ENCODE measurements at regions of chr7 and their contacts with region 1.

Region 1: DNA sequence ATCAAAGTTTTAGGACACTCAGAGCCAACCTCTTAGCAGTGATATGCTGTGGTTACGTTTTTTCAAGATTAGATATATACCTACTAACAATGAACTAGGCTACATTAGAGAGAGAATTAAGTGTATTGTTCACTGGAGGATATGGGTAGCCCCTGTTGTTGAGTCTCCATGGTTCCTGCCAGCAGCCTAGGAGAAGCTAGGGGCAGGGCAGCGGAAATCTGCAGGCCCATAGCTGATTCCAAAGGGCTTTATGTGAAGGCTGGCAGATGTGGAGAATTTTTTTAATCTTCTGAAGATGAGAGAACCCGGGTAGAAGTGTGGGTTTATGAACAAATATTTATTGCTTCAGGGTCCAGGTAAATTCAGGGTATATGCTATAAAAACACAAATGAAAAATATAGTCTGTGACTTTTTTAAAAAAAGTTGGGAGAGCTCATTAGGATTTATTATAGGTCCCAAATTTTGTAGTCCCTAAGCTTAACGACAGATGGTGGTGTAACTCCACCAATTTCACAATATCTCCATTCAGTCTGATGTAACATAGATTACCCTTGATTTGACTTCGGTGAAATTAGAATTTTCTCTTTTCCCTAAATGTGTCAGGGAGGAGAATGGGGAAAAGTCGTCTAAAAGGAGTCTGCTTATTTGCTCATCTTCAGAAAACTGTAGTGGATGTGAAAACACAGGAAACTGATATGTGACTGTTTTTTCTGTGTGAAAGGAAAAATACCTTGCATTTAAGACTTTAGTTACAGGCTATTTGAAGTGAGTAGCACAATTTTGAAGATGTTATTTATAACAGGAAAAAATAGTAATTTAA is 163.0 kb upstream of the PPP1R3A start:
- DNase-seq: no peak
- ATAC-seq: no peak
- H3K4me3 Mint-ChIP-seq: peak overlapping the region; percentile 86
- H3K27ac Mint-ChIP-seq: no peak overlapping the region
- H3K4me1 Mint-ChIP-seq: peaks cover 20% of the 10 kb centered on the region
- H3K27me3 Mint-ChIP-seq: peaks cover 53% of the 10 kb centered on the region
- CTCF ChIP-seq: peak; percentile 49

Region 2: GRCh38 chr7:114405427-114405826 is 323.6 kb after region 1 on chr7:
- CTCF ChIA-PET with region 1: interaction called, 10 read pairs
- POLR2A ChIA-PET with region 1: no interaction called
- DNase-seq: no peak
- ATAC-seq: peak; percentile 61
- H3K4me3 Mint-ChIP-seq: no peak overlapping the region
- H3K27ac Mint-ChIP-seq: no peak overlapping the region
- H3K4me1 Mint-ChIP-seq: no peaks in the 10 kb centered on the region
- H3K27me3 Mint-ChIP-seq: no peaks in the 10 kb centered on the region
- CTCF ChIP-seq: peak; percentile 39; the same call in 1 of the 2 replicates

Region 3: GRCh38 chr7:114414156-114415063 is 332.6 kb after region 1 on chr7 and contains the start of gene FOXP2:
- CTCF ChIA-PET with region 1: interaction called, 16 read pairs
- POLR2A ChIA-PET with region 1: no interaction called
- DNase-seq: no peak
- ATAC-seq: peak; percentile 20; the same call in 1 of the 2 replicates
- H3K4me3 Mint-ChIP-seq: no peak within 1 kb of the TSS
- H3K27ac Mint-ChIP-seq: no peak within 1 kb of the TSS
- H3K4me1 Mint-ChIP-seq: peaks cover 7% of the 10 kb centered on the region
- H3K27me3 Mint-ChIP-seq: no peaks in the 10 kb centered on the region
- CTCF ChIP-seq: no peak
- total RNA-seq, gene FOXP2: 0.14 to 0.39 TPM (median 0.17 TPM) in 3 replicates

Region 4: DNA sequence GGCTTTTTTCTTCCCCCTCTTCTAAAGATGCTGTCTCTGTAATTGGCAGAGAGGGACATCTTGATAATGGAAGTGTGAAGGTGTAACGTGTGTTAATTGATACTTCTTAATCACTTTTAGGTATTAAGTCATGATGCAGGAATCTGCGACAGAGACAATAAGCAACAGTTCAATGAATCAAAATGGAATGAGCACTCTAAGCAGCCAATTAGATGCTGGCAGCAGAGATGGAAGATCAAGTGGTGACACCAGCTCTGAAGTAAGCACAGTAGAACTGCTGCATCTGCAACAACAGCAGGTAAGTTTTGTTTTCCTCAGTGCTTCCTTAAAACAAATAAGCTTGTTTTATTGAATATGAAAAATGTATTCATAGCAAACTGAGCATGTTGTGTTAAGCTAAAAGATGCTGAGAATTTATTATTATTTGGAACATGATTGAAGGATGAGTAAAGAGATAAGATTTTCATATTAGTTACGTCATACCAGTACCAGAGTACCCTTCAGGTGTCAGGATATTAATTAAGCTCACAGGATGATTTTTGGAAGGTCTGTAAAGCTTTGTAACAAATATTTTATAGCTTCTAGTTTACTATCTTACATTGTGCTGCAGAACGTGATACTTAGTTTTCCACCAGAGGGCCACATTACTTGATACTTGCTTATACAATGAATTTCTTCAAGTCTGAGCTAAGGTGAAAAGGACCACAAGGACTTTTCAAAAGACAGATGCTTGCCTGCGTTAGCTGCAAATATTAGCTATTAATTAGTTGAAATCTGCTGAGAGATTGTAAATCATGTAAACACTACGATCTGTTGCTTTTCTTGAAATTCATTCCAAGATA is 344.8 kb after region 1 on chr7:
- CTCF ChIA-PET with region 1: interaction called, 14 read pairs
- POLR2A ChIA-PET with region 1: no interaction called
- DNase-seq: no peak
- ATAC-seq: peak; percentile 72
- H3K4me3 Mint-ChIP-seq: no peak overlapping the region
- H3K27ac Mint-ChIP-seq: no peak overlapping the region
- H3K4me1 Mint-ChIP-seq: no peaks in the 10 kb centered on the region
- H3K27me3 Mint-ChIP-seq: no peaks in the 10 kb centered on the region
- CTCF ChIP-seq: no peak

Region 5: DNA sequence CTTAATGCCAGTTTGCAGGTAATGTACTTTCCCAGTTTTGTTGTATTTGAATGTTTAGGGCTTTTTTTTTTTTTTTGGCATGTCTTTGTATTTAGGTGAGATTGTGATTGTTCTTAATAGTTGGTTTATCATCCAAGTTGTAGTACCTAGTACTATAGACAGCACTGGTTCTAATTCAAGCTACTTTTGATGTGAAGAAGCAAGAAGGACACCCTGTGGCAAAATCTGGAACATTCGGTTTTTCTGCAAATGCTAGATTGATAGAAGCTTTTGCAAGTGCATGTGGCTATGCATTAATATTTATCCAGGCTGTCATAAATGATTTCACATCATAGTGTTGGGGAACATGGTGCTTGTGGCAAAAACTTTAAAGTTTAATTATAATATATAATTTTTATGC is 581.7 kb after region 1 on chr7:
- CTCF ChIA-PET with region 1: interaction called, 28 read pairs
- POLR2A ChIA-PET with region 1: no interaction called
- DNase-seq: no peak
- ATAC-seq: peak; percentile 71
- H3K4me3 Mint-ChIP-seq: no peak overlapping the region
- H3K27ac Mint-ChIP-seq: no peak overlapping the region
- H3K4me1 Mint-ChIP-seq: peaks cover 38% of the 10 kb centered on the region
- H3K27me3 Mint-ChIP-seq: no peaks in the 10 kb centered on the region
- CTCF ChIP-seq: 0 out of 2 replicates have a peak, but pooled peaks have one; percentile 16

Measured in WTC11 (cell line).